Right ventricle myocardium inferior (tissue), 1 donor: ENCODE measurements at regions of chr7 and their contacts with region 1.

Region 1: DNA sequence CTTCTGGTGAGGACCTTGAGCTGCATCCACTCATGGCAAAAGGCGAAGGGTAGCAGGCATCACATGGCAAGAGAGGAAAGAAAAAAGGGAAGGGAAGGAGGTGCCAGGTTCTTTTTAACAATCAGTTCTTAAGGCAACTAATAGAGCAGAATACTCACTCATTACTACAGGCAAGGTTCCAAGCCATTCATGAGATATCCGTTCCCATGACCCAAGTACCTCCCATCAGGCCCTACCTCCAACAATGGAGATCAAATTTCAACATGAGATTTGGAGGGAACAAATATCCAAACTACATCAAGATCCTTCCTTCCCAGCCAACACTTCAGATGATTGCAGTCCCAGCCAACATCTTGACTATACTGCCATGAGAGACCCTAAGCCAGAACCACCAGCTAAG is 38.9 kb upstream of the YAE1 start:
- DNase-seq: no peak
- ATAC-seq: no peak

Region 2: GRCh38 chr7:38398725-38399321 is 1128.5 kb before region 1 on chr7:
- intact Hi-C with region 1: loop called (anchors 10 kb)
- DNase-seq: peak; percentile 78
- ATAC-seq: no peak

Region 3: GRCh38 chr7:38932509-38933168 is 594.7 kb before region 1 on chr7:
- intact Hi-C with region 1: loop called (anchors 10 kb)
- DNase-seq: peak; percentile 78
- ATAC-seq: no peak